Activated CD8-positive, alpha-beta T cell treated with anti-CD3 and anti-CD28 coated beads for 36 hours (primary cell): ENCODE measurements at regions of chr15 and their contacts with region 1.

Region 1: DNA sequence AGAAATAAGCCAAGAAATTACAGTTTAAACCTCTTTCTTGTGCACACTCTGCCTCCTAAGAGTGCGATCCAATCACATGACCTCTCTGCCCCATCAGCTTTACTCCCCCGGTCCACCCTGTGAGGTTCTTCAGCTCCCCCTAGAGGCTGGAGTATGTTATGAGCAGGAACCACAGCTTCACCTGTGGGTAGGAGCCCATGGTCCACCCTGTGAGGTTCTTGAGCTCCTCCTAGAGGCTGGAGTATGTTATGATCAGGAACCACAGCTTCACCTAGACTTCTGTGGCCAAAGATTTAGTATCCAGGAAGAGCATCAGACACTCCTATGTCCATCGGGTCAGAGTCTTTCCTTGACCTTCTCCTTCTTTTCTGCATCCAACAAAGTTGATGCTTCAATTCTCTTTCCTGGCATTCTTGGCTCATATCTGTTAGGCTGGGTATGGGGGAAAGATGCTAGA is 163.9 kb downstream of the MINAR1 start:
- DNase-seq: peak; percentile 78
- ATAC-seq: peak; percentile 100
- H3K4me3 Mint-ChIP-seq: no peak overlapping the region
- H3K27ac Mint-ChIP-seq: no peak overlapping the region
- H3K4me1 Mint-ChIP-seq: no peaks in the 10 kb centered on the region
- H3K27me3 Mint-ChIP-seq: peaks cover 24% of the 10 kb centered on the region
- CTCF ChIP-seq: peak; percentile 85

Region 2: DNA sequence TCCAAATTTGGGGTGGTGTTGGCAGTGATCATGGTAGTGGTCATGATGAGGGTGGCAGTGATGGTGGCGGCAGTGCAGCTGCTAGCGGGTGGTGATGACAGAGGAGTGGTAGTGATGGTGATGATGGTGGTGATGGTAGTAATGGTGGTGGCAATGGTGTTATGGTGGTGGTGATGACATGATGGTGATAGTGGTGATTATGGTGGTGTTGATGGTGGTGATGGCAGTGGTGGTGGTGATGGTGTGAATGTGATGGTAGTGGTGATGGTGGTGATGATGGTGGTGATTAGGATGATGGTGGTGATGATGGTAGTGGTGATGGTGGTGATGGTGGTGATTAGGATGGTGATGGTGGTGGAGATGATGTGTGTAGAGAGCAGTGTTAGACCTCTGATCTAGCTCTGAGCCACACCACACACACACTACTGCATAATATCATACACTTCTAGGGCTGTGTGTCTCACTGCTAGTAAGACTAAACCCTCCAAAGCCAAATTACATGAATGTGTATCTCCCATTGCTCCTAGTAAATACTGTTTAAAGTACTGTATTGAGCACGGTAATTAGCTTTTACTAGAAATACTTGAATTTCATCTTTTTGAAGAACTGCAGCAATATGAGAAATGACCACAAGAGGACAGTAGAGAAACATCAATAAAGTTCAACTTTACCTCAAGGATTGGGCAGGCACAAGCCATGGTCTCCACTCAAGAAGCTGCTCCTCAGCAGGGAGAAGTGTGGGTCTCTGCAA is 256.3 kb before region 1 on chr15:
- CTCF ChIA-PET with region 1: interaction called, 26 read pairs
- POLR2A ChIA-PET with region 1: no interaction called
- intact Hi-C with region 1: no loop called
- DNase-seq: peak; percentile 6
- ATAC-seq: no peak
- H3K4me3 Mint-ChIP-seq: no peak overlapping the region
- H3K27ac Mint-ChIP-seq: no peak overlapping the region
- H3K4me1 Mint-ChIP-seq: no peaks in the 10 kb centered on the region
- H3K27me3 Mint-ChIP-seq: no peaks in the 10 kb centered on the region
- CTCF ChIP-seq: peak; percentile 71

Region 3: DNA sequence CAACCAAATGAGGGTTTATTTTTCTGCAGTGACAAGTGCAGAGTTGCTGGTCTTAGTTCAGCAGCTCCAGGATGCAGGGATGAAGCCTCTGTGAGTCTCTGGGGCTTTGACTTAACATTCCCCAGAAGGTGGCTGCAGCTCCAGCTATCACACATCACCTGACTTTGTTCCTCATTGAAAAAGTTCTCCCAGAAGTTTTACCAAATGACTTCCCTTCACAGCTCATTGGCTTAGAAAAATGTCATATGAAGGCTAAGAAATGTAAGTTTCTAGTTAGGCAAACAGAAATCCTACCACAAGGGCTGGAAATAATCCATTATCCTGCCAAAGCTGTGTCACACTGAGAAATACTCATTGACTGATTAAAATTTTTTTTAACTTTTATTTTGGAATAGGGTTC is 21.0 kb after region 1 on chr15:
- CTCF ChIA-PET with region 1: no interaction called
- POLR2A ChIA-PET with region 1: no interaction called
- intact Hi-C with region 1: no loop called
- DNase-seq: no peak
- ATAC-seq: no peak
- H3K4me3 Mint-ChIP-seq: no peak overlapping the region
- H3K27ac Mint-ChIP-seq: no peak overlapping the region
- H3K4me1 Mint-ChIP-seq: no peaks in the 10 kb centered on the region
- H3K27me3 Mint-ChIP-seq: peaks cover 7% of the 10 kb centered on the region
- CTCF ChIP-seq: no peak